Activated B cell treated with CpG ODN at 0.5 μM for 24 hours (primary cell): ENCODE measurements at regions of chr22 and their contacts with region 1.

Region 1: DNA sequence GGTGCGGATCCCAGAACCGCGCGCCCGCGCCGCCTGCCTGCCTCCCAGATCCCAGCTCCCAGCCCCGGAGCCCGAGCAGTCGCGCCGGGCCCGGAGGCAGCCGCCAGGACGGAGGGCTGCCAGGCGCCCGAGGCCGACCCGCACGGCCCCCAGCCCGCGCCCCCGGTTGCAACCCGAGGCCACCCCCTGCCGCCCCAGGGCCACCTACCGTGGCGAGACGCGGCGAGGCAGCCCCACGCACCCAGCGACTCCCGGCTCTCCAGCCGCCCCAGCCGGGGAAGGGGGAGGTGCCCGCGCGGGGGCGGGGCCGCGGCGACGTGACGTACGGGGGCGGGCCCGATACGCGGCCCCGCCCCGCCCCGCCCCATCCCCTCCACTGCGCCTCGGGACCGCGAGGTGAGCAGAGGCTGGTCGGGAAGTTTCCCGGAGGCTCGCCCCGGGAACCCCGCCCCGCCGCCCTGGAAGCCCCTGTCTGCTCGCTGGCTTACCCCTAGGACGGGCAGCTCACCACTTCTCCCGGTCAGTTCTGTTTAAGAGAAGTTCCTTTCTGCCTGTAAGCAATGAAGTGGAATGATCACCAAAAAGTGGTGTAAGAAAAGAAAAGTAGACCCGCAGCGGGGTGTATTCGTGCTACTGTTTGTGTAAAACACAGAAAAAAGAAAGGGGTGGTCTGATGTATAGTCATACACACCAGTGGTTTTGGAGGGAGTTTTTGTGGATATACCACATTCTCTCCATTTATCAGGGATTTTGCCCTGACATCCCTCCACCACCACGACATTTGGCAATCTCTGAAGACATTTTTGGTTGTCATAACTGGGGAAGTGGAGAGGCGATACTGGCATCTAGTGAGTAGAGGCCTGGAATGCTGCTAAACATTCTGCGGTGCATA is at the start of gene TPST2:
- DNase-seq: peak; percentile 78
- ATAC-seq: peak; percentile 94
- H3K4me3 Mint-ChIP-seq: peak within 1 kb of the TSS; percentile 87
- H3K27ac Mint-ChIP-seq: peak within 1 kb of the TSS; percentile 72
- H3K4me1 Mint-ChIP-seq: peaks cover 39% of the 10 kb centered on the region
- H3K27me3 Mint-ChIP-seq: no peaks in the 10 kb centered on the region
- CTCF ChIP-seq: no peak
- total RNA-seq, gene TPST2: 10.4 and 11.0 TPM in 2 replicates

Region 2: GRCh38 chr22:26511857-26512793 is 78.0 kb before region 1 on chr22 and contains the start of gene TFIP11:
- CTCF ChIA-PET with region 1: no interaction called
- POLR2A ChIA-PET with region 1: interaction called, 5 read pairs
- intact Hi-C with region 1: loop called (anchors 1 kb)
- DNase-seq: peak; percentile 89
- ATAC-seq: peak; percentile 94
- H3K4me3 Mint-ChIP-seq: peak within 1 kb of the TSS; percentile 100
- H3K27ac Mint-ChIP-seq: peak within 1 kb of the TSS; percentile 96
- H3K4me1 Mint-ChIP-seq: peaks cover 39% of the 10 kb centered on the region
- H3K27me3 Mint-ChIP-seq: no peaks in the 10 kb centered on the region
- CTCF ChIP-seq: no peak
- total RNA-seq, gene TFIP11: 59.0 and 62.8 TPM in 2 replicates

Region 3: DNA sequence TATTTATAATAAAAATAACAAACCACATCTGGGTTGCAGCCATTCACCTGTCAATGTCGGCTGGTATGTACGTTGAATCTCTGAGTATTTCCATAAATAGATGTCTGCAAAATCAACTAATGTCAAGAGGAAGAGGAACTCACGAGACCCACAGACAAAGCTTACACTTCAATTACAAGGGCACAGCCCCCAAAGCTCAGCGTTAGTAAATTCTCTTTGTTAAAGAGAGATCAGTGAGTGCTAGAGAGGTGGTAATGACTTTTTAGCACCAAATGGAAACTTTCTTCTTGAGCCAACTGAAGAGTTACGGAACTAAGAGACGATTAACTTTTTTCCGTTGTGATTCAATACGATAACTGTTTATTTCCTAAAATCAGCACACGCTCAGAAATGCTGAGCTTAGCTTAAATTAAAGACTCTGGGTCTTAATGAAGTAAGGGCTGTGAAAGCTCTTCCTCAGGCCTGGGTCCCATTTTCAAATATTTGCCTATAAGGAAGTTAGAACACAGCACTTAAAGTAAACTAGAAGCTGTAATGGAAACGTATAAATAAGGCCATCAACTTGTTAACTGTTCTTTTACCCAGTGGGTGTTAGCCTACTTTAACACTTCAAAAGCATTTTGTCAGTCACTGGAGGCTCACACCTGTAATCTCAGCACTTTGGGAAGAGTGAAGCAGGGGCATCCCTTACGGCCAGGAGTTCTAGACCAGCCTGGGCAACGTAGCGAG is 55.1 kb before region 1 on chr22:
- CTCF ChIA-PET with region 1: no interaction called
- POLR2A ChIA-PET with region 1: interaction called, 4 read pairs
- intact Hi-C with region 1: loop called (anchors 1 kb)
- DNase-seq: no peak
- ATAC-seq: peak; percentile 50
- H3K4me3 Mint-ChIP-seq: peak overlapping the region; percentile 67
- H3K27ac Mint-ChIP-seq: peak overlapping the region; percentile 94
- H3K4me1 Mint-ChIP-seq: peaks cover 49% of the 10 kb centered on the region
- H3K27me3 Mint-ChIP-seq: no peaks in the 10 kb centered on the region
- CTCF ChIP-seq: no peak

Region 4: DNA sequence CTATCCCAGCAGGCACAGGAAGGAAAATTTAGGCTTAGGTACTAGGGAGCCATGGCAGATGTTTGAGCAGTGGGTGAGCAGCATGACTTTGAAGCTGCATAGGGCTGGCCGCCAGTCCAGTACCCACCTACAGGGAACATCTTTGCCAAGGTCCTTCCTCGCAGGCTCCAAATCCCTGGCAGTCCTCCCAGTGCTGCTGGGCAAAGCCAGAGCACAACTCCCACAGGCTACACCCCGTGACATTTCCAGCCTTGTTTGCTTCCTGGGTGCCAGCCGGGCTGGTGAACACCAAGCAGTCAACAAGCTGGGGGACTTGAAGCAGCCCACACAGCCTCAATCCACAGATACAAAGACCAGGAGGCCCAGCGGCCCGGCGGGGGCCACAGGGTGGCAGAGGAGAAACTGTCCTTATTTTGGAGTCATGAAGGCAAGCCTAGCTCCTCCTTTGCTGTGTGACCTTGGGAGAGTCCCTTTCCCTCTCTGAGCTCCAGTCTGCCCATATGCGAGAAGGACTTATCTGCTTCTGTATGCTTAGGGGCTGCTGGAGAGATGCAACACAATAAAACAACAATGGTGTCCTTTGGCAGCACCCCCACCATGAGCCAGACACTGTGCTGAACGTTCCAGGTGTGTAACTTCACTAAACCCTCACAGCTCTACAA is 28.2 kb before region 1 on chr22:
- CTCF ChIA-PET with region 1: no interaction called
- POLR2A ChIA-PET with region 1: interaction called, 12 read pairs
- intact Hi-C with region 1: no loop called
- DNase-seq: no peak
- ATAC-seq: no peak
- H3K4me3 Mint-ChIP-seq: no peak overlapping the region
- H3K27ac Mint-ChIP-seq: no peak overlapping the region
- H3K4me1 Mint-ChIP-seq: peaks cover 4% of the 10 kb centered on the region
- H3K27me3 Mint-ChIP-seq: no peaks in the 10 kb centered on the region
- CTCF ChIP-seq: no peak

Region 5: DNA sequence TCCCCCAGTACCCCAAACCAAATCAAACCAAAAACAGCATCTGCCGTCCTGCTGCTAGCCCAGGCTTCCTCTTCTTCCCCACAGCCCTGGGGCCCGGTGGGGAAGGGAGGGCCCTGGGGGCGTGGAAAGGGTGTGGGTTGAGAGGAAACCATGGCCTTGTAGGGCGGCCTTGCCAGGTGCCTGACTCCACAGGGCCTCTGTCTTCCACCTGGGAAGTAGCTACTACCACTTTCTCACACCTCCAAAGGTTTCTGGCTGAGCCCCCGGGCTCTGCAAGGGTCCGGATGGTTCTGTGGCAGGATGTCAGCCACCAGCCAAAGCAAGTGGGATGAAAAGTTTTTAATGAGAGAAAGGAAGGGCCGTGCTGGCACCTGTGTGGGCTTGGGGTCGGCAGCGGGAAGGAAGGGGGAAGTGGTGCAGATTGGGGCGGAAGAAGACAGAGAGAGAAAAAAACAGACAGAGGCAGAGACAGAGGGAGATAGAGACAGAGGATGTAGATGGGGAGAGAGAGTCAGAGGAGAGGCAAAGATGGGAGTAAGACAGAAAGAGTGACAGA is 10.7 kb before region 1 on chr22:
- CTCF ChIA-PET with region 1: no interaction called
- POLR2A ChIA-PET with region 1: no interaction called
- intact Hi-C with region 1: loop called (anchors 1 kb)
- DNase-seq: peak; percentile 56
- ATAC-seq: peak; percentile 91
- H3K4me3 Mint-ChIP-seq: peak overlapping the region; percentile 70
- H3K27ac Mint-ChIP-seq: peak overlapping the region; percentile 89
- H3K4me1 Mint-ChIP-seq: peaks cover 42% of the 10 kb centered on the region
- H3K27me3 Mint-ChIP-seq: no peaks in the 10 kb centered on the region
- CTCF ChIP-seq: no peak

Region 6: DNA sequence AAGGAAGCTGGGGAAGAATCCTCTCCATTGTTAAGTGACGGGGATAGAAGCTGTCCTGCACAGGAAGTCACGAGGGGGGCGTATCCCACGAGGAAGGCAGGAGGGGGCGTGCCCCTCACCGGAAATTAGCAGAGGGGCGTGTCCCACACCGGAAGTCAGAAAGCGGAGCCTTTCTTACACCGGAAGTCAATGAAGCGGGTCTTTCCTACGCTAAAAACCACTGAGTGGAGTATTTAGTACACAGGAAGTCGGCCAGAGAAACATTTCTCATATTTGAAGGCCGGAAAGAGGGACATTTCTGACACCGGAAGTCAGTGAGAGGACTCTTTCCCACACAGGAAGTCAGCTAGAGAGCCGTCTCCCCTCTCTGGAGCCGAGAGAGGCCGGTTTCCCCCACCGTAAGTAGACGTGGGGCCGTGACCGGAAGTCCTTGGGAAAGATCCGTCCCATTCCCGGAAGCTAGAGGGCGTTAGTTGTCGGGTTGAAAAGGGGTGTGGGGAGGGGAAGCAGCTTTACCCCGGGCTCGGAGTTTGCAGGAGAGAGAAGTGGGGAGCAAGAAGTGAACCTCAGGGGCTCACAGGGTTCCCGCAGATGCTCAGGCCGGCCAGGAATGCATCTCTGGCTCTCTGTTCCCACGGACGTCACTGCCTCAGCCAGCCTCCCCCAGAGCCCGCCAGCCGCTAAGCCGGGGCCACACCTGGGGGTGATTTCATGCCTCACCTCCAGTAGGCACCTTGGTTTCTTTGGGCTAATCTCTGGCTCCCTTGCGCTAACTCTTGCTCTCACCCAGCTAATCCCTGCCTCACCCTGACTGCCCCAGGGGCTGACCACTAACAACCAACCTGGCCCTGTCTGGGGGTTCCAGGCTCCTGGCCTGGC is 82.7 kb after region 1 on chr22:
- CTCF ChIA-PET with region 1: no interaction called
- POLR2A ChIA-PET with region 1: no interaction called
- intact Hi-C with region 1: loop called (anchors 2 kb)
- DNase-seq: peak; percentile 82
- ATAC-seq: peak; percentile 67
- H3K4me3 Mint-ChIP-seq: peak overlapping the region; percentile 98
- H3K27ac Mint-ChIP-seq: peak overlapping the region; percentile 99
- H3K4me1 Mint-ChIP-seq: peaks cover 92% of the 10 kb centered on the region
- H3K27me3 Mint-ChIP-seq: no peaks in the 10 kb centered on the region
- CTCF ChIP-seq: no peak